ENCODE measurements at regions of chr7 and their contacts with region 1.

Region 1: DNA sequence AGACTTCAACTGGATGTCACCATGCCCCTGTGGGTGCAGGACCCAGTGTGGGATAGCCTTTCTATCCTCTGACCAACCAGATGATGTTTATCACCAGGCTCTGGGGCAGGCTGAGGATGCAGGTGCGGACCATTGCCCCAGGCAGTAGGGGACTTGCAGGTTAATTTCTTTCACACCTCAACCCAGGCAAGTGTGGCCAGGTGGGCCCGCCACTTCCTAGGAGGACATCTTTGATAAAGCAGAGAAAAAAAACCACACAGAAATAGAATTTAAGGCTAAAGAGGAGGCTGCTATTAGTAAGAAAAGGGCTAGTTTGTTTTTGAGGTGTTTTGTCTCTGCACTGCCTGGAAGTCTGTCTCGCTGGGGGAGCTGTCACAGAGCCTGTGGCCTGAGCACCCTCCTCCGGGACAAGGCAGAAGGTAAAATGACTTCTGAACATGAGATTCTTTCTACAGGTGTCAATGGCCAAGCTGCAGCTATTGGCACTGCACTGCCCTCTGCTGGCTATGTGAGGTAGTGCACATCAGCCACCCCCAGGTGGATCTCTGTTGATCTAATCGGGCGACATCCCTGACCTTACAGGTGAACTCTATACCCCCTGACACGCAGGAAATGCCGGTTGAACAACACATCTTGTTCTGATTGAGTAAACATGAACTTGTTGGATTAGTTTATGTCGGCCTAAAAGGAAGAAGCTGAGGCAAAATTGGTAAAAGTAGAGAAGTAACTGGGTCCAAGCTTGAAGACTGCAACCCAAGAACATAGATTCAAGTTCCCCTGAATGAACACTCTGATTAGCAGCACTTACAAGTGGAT is 21.0 kb downstream of the UPP1 start:
- DNase-seq: peak; percentile 82 to 88
- H3K4me3 ChIP-seq: no peak overlapping the region
- H3K4me3 Mint-ChIP-seq: no peak overlapping the region
- H3K27ac Mint-ChIP-seq: peak overlapping the region; percentile 13
- H3K4me1 ChIP-seq: peaks cover 9% of the 10 kb centered on the region
- H3K4me1 Mint-ChIP-seq: peaks cover 18% of the 10 kb centered on the region
- H3K27me3 ChIP-seq: no peaks in the 10 kb centered on the region
- H3K27me3 Mint-ChIP-seq: no peaks in the 10 kb centered on the region
- CTCF ChIP-seq: peak; percentile 97 to 98

Region 2: DNA sequence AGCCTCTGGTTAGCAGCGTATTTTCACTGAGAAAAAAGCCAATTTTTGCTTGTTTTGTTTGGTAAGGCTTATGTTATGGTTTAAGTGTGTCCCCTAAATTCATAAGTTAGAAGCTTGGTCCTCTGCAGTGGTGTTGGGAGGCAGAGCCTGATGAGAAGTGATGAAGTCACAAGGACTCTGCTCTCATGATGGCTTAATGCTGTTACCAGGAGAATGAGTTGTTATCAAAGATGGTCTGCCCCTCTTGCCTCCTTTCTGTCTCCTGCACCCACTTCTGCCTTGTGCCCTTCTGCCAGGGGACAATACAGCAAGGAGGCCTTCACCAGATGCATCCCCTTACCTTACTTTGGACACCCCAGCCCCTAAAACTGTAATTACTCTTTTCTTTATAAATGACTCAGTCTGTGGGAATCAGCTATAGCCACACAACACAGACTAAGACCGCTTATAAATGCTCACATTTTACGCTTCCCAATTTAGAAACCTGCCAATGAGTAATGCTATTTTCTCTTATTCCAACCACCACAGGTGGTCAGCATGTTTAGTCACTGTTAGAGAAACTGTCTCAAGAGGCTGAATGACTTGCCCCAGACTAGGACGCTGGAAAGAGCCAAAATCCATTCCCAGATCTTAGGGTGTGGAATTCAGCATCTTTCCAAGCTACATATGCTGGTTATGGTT is 155.7 kb before region 1 on chr7:
- CTCF ChIA-PET with region 1: no interaction called
- POLR2A ChIA-PET with region 1: no interaction called
- intact Hi-C with region 1: loop called (anchors 1 kb)
- DNase-seq: no peak
- H3K4me3 ChIP-seq: no peak overlapping the region
- H3K4me3 Mint-ChIP-seq: no peak overlapping the region
- H3K27ac Mint-ChIP-seq: no peak overlapping the region
- H3K4me1 ChIP-seq: peaks cover 20% of the 10 kb centered on the region
- H3K4me1 Mint-ChIP-seq: peaks cover 26% of the 10 kb centered on the region
- H3K27me3 ChIP-seq: no peaks in the 10 kb centered on the region
- H3K27me3 Mint-ChIP-seq: no peaks in the 10 kb centered on the region
- CTCF ChIP-seq: no peak

Region 3: DNA sequence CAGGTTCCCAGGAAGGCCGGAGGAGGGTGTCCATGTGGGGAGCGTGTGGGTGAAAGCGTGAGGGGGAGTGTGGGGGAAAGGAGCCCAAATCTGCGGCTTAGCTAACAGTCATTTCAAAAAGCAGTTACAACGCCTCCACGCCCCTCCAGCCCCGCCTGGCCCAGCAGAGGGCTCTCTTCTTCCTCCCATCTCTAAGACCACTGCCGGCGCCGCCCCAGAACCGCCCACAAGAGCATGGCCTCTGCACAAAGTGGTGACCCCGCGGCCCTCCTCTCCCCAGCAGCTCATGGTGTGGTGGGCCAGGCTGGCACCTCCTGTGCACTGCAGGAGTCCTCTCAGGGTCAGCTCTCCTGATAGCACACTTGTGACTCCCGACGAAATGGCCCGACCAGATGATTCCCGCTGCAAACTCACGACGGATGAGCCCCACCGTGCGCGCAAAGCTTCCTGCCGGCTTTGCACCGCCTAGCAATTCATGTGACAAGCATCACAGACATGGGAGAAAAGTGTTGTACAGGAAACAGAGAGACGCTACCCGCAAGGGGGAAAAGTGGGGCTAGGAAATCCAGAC is 118.2 kb before region 1 on chr7:
- CTCF ChIA-PET with region 1: interaction called, 27 read pairs
- POLR2A ChIA-PET with region 1: no interaction called
- intact Hi-C with region 1: loop called (anchors 1 kb)
- DNase-seq: peak; percentile 88 to 90
- H3K4me3 ChIP-seq: peak overlapping the region; percentile 51
- H3K4me3 Mint-ChIP-seq: peak overlapping the region; percentile 85
- H3K27ac Mint-ChIP-seq: peak overlapping the region; percentile 68
- H3K4me1 ChIP-seq: peaks cover 23% of the 10 kb centered on the region
- H3K4me1 Mint-ChIP-seq: peaks cover 25% of the 10 kb centered on the region
- H3K27me3 ChIP-seq: no peaks in the 10 kb centered on the region
- H3K27me3 Mint-ChIP-seq: no peaks in the 10 kb centered on the region
- CTCF ChIP-seq: peak; percentile 72 to 82

Region 4: GRCh38 chr7:48077423-48077822 is 32.6 kb before region 1 on chr7:
- CTCF ChIA-PET with region 1: no interaction called
- POLR2A ChIA-PET with region 1: no interaction called
- intact Hi-C with region 1: no loop called
- DNase-seq: no peak
- H3K4me3 ChIP-seq: no peak overlapping the region
- H3K4me3 Mint-ChIP-seq: no peak overlapping the region
- H3K27ac Mint-ChIP-seq: no peak overlapping the region
- H3K4me1 ChIP-seq: no peaks in the 10 kb centered on the region; the same call in 1 of the 2 replicates
- H3K4me1 Mint-ChIP-seq: no peaks in the 10 kb centered on the region
- H3K27me3 ChIP-seq: no peaks in the 10 kb centered on the region
- H3K27me3 Mint-ChIP-seq: no peaks in the 10 kb centered on the region
- CTCF ChIP-seq: no peak

Region 5: DNA sequence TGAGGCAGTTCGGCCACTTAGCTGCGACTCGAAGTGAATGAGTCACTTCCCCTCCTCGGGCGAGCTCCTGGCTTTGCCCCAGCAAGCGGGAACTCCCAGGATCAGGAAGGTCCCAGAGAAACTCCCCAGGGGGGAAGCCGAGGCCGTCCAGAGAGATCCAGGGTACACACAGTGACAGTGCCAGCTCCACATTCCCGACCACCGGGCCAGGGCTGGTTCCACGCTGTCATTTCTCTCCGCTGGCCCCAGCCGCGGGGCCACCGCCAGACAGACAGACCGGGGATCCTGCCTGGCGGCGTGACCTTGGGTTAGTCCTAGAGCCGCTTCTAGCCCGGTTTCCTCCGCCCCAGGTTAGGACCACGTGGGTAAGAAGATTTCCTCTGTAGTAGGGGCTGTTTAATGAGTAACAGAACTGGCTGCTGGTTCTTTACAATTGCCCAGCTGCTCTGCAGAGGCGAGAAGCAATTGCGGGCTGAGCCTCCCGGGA is 21.5 kb before region 1 on chr7:
- CTCF ChIA-PET with region 1: interaction called, 12 read pairs
- POLR2A ChIA-PET with region 1: interaction called, 11 read pairs
- intact Hi-C with region 1: loop called (anchors 1 kb)
- DNase-seq: peak; percentile 84 to 98
- H3K4me3 ChIP-seq: peak overlapping the region; percentile 68
- H3K4me3 Mint-ChIP-seq: peak overlapping the region; percentile 85
- H3K27ac Mint-ChIP-seq: peak overlapping the region; percentile 94
- H3K4me1 ChIP-seq: peaks cover 34% of the 10 kb centered on the region
- H3K4me1 Mint-ChIP-seq: peaks cover 26% of the 10 kb centered on the region
- H3K27me3 ChIP-seq: no peaks in the 10 kb centered on the region
- H3K27me3 Mint-ChIP-seq: no peaks in the 10 kb centered on the region
- CTCF ChIP-seq: no peak